CD4-positive, alpha-beta memory T cell (primary cell): ENCODE measurements at regions of chr14 and their contacts with region 1.

Region 1: GRCh38 chr14:24108336-24108874 is 6.2 kb upstream of the DCAF11 start:
- DNase-seq: no peak
- H3K4me3 ChIP-seq: no peak overlapping the region
- H3K4me3 Mint-ChIP-seq: peak overlapping the region in 4 of 8 donors; percentile 30 to 64 (median 44)
- H3K27ac ChIP-seq: peak overlapping the region; percentile 45
- H3K27ac Mint-ChIP-seq: peak overlapping the region; percentile 82 to 96 (median 95)
- H3K4me1 ChIP-seq: peaks cover 18% of the 10 kb centered on the region
- H3K4me1 Mint-ChIP-seq: peaks cover 6 to 15% (median 12%) of the 10 kb centered on the region in 4 donors
- H3K27me3 ChIP-seq: no peaks in the 10 kb centered on the region
- H3K27me3 Mint-ChIP-seq: no peaks in the 10 kb centered on the region

Region 2: DNA sequence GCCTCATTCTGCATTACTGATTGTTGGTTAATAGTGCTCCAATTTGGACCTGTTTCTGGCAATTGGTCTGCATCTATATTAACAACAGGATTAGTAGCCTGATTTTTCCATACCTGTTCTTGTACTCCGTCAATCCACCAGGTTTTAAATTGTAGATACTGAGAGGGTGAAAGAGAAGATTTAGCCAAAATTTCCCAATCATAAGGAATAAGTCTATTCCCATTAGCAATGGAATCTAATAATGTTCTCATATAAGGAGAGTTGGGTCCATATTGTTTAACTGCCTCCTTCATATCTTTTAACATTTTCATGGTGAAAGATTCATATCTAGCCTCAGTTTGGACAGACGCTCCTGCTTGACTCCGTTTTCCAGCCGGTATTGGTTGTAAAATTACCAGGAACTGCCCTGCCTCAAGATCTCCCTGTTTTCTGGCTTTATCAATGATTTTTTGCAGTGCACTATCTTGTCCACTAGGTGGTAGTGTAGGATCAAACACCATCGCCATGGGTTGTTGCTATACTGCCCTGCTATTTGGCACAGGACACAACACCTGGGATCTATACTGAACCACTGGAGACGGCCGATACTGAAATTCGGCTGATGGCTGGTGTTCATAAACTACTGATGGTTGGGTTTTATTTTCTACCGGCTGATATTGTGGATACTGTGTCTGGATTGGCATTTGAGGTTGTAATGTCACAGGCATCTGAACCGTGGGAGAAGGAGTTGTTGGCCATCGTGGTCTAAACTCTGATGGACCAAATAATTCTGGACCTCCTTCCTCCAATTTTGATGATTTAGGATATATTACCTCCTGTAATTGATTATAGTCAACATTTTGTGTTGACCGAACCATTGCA is 94.5 kb before region 1 on chr14:
- CTCF ChIA-PET with region 1: interaction called, 6 read pairs
- POLR2A ChIA-PET with region 1: no interaction called
- intact Hi-C with region 1: loop called (anchors 1 kb)
- DNase-seq: peak; percentile 60 to 77 (median 70)
- H3K4me3 ChIP-seq: no peak overlapping the region
- H3K4me3 Mint-ChIP-seq: no peak overlapping the region
- H3K27ac ChIP-seq: no peak overlapping the region
- H3K27ac Mint-ChIP-seq: no peak overlapping the region
- H3K4me1 ChIP-seq: peaks cover 19% of the 10 kb centered on the region
- H3K4me1 Mint-ChIP-seq: peaks cover 19 to 27% (median 23%) of the 10 kb centered on the region in 4 donors
- H3K27me3 ChIP-seq: no peaks in the 10 kb centered on the region
- H3K27me3 Mint-ChIP-seq: peaks cover 0 to 3% of the 10 kb centered on the region in 2 donors

Region 3: DNA sequence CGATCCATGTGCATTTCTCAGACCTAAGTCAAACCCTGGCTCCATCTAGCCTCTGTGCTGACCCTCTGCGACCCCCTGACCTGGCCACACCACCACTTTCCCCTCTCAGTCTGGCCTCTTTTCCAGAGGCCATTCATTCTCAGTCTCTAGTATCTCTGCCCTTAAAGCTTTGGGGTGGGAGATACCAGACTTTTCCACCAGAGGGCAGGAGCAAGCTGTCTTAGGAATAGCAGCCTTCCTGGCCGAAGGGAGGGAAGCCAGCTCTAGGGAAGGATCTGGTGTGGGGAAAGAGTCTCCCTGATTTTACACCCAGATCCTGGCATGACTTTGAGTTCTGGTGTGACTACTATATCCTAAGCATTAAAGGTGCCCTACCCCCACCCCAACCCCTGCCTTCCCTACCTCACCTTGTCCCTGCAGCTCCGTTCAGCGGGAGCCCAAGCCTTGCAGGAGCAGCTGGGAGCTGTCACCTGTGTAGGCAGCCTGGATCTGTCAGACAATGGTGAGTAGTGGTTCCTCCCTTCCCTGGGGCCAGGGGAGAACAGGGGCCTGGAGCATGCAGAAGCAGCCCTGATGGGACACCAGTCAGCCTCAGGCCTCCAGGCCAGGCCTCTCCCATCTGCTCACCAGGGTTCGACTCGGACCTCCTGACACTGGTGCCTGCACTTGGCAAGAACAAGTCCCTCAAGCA is 50.0 kb before region 1 on chr14:
- CTCF ChIA-PET with region 1: interaction called, 392 read pairs
- POLR2A ChIA-PET with region 1: interaction called, 55 read pairs
- intact Hi-C with region 1: loop called (anchors 1 kb)
- DNase-seq: peak; percentile 49 to 63 (median 61)
- H3K4me3 ChIP-seq: no peak overlapping the region
- H3K4me3 Mint-ChIP-seq: peak overlapping the region in 1 of 8 donors; percentile 59
- H3K27ac ChIP-seq: no peak overlapping the region
- H3K27ac Mint-ChIP-seq: peak overlapping the region in 6 of 7 donors; percentile 10 to 81 (median 36)
- H3K4me1 ChIP-seq: no peaks in the 10 kb centered on the region
- H3K4me1 Mint-ChIP-seq: peaks cover 2 to 8% (median 3%) of the 10 kb centered on the region in 4 donors
- H3K27me3 ChIP-seq: no peaks in the 10 kb centered on the region
- H3K27me3 Mint-ChIP-seq: peaks cover 2% of the 10 kb centered on the region in 2 donors

Region 4: DNA sequence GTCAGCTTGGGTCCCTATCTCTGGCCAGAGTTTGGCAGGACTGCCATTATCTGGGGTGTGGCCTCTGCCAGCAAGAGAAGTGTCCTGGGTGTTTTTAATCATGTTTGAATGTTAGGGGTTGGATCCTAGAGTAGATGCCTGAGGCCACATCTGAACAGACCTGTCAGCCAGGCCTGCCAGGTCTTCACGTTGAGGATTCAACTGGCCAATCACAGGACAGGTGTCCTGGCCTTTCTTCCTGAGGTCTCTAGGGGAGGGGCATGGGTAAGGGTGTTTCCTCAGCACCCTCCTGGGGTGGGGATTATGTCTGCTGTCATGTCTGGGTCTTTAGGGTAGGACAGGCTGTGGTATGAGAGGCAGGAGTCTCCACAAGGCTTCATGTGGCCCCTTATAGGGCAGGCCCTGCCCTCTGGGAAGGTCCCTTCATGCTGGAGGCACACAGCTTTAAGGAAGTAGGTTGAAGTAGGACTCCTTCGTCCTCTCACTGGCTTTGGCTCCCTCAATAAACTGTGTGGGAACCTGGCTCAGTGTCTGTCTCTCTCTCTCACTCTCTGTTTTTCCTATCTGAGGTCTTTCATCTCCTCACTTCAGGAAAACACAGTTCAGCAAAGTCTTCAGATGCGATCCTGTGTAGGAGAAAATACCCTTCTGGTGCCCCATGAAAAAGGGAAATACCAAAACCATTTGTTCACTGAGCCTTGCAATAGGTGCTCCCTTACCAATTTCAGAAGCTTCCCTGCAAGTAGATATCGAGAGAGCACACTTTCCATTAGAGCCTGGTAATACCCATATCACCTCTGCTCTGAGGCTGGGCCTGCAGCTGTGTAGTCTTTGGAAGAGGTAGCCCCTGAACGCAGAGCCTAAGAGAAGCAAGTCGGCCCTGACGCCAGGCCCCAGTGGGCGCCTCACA is 15.4 kb after region 1 on chr14:
- CTCF ChIA-PET with region 1: interaction called, 16 read pairs
- POLR2A ChIA-PET with region 1: interaction called, 347 read pairs
- intact Hi-C with region 1: no loop called
- DNase-seq: no peak
- H3K4me3 ChIP-seq: no peak overlapping the region
- H3K4me3 Mint-ChIP-seq: no peak overlapping the region
- H3K27ac ChIP-seq: no peak overlapping the region
- H3K27ac Mint-ChIP-seq: peak overlapping the region in 5 of 7 donors; percentile 9 to 61 (median 51)
- H3K4me1 ChIP-seq: no peaks in the 10 kb centered on the region
- H3K4me1 Mint-ChIP-seq: peaks cover 2 to 5% (median 4%) of the 10 kb centered on the region in 4 donors
- H3K27me3 ChIP-seq: no peaks in the 10 kb centered on the region
- H3K27me3 Mint-ChIP-seq: no peaks in the 10 kb centered on the region

Region 5: GRCh38 chr14:24146978-24147760 is 38.8 kb after region 1 on chr14 and contains the start of gene RNF31:
- CTCF ChIA-PET with region 1: interaction called, 36 read pairs
- POLR2A ChIA-PET with region 1: interaction called, 104 read pairs
- intact Hi-C with region 1: no loop called
- DNase-seq: peak; percentile 95 to 99 (median 97)
- H3K4me3 ChIP-seq: peak within 1 kb of the TSS; percentile 85 to 99
- H3K4me3 Mint-ChIP-seq: peak within 1 kb of the TSS; percentile 97 to 100 (median 98)
- H3K27ac ChIP-seq: peak within 1 kb of the TSS; percentile 92
- H3K27ac Mint-ChIP-seq: peak within 1 kb of the TSS; percentile 95 to 99 (median 98)
- H3K4me1 ChIP-seq: peaks cover 63% of the 10 kb centered on the region
- H3K4me1 Mint-ChIP-seq: peaks cover 32 to 80% (median 54%) of the 10 kb centered on the region in 4 donors
- H3K27me3 ChIP-seq: no peaks in the 10 kb centered on the region
- H3K27me3 Mint-ChIP-seq: no peaks in the 10 kb centered on the region
- total RNA-seq, gene RNF31: 108 to 113 TPM

Region 6: GRCh38 chr14:24310646-24311604 is 202.5 kb after region 1 on chr14 and contains the start of gene LTB4R:
- CTCF ChIA-PET with region 1: interaction called, 10 read pairs
- POLR2A ChIA-PET with region 1: no interaction called
- intact Hi-C with region 1: no loop called
- DNase-seq: peak; percentile 73 to 79 (median 77)
- H3K4me3 ChIP-seq: peak within 1 kb of the TSS; percentile 55 to 58
- H3K4me3 Mint-ChIP-seq: peak within 1 kb of the TSS; percentile 83 to 94 (median 88)
- H3K27ac ChIP-seq: peak within 1 kb of the TSS; percentile 72
- H3K27ac Mint-ChIP-seq: peak within 1 kb of the TSS; percentile 90 to 97 (median 95)
- H3K4me1 ChIP-seq: peaks cover 71% of the 10 kb centered on the region
- H3K4me1 Mint-ChIP-seq: peaks cover 58 to 89% (median 72%) of the 10 kb centered on the region in 4 donors
- H3K27me3 ChIP-seq: no peaks in the 10 kb centered on the region
- H3K27me3 Mint-ChIP-seq: no peaks in the 10 kb centered on the region
- total RNA-seq, gene LTB4R: 19.5 to 20.0 TPM

Region 7: GRCh38 chr14:24513009-24513408 is 404.6 kb after region 1 on chr14:
- CTCF ChIA-PET with region 1: no interaction called
- POLR2A ChIA-PET with region 1: no interaction called
- intact Hi-C with region 1: no loop called
- DNase-seq: no peak
- H3K4me3 ChIP-seq: no peak overlapping the region
- H3K4me3 Mint-ChIP-seq: no peak overlapping the region
- H3K27ac ChIP-seq: no peak overlapping the region
- H3K27ac Mint-ChIP-seq: no peak overlapping the region
- H3K4me1 ChIP-seq: no peaks in the 10 kb centered on the region
- H3K4me1 Mint-ChIP-seq: no peaks in the 10 kb centered on the region
- H3K27me3 ChIP-seq: no peaks in the 10 kb centered on the region
- H3K27me3 Mint-ChIP-seq: peaks cover 6 to 10% of the 10 kb centered on the region in 2 donors

Region 8: GRCh38 chr14:25833341-25834126 is 1725.1 kb after region 1 on chr14:
- CTCF ChIA-PET with region 1: no interaction called
- POLR2A ChIA-PET with region 1: no interaction called
- intact Hi-C with region 1: no loop called
- DNase-seq: no peak
- H3K4me3 ChIP-seq: no peak overlapping the region
- H3K4me3 Mint-ChIP-seq: no peak overlapping the region
- H3K27ac ChIP-seq: no peak overlapping the region
- H3K27ac Mint-ChIP-seq: no peak overlapping the region
- H3K4me1 ChIP-seq: no peaks in the 10 kb centered on the region
- H3K4me1 Mint-ChIP-seq: no peaks in the 10 kb centered on the region
- H3K27me3 ChIP-seq: no peaks in the 10 kb centered on the region
- H3K27me3 Mint-ChIP-seq: no peaks in the 10 kb centered on the region